ENCODE measurements at regions of chr1 and their contacts with region 1.

Region 1: DNA sequence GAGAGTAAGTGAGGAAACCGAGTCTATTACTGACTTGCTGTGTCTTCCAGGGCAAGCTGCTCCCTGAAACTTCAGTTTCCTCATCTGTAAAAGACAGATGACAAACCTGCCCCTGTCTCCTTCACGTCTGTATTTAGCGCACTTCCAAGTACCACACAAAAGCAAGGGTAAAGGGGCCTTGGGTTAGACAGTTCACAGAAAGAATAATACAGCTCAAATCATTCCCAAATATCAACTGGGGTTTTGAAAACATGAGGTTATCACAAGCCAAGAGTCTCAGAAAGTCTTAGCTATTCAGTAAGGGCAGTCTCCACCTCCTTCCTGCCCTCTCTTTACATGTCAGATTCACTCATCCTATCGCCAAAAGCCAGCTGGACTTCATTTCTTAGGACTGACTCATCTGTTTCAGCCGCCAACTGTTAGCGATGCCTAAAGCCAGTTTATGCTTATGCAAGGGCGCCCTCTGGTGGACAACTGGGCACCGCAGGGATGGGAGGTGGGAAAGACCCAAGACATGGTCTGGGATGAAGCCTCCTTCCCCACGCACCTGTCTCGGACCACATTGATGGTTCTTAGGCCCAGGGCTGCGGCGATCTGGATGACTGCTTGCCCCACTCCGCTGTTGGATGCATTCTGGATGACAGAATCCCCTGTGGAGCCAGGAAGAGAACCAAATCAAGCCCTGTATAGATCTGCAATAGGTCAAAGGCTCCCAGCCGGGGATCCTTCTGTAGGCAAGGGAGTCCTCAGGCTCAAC is 21.1 kb upstream of the SRSF4 start:
- DNase-seq: peak; percentile 99
- H3K4me3 ChIP-seq: no peak overlapping the region
- H3K27ac ChIP-seq: peak overlapping the region; percentile 44
- H3K4me1 ChIP-seq: no peaks in the 10 kb centered on the region
- H3K27me3 ChIP-seq: no peaks in the 10 kb centered on the region
- CTCF ChIP-seq: peak; percentile 96

Region 2: GRCh38 chr1:29011775-29012174 is 191.0 kb before region 1 on chr1:
- intact Hi-C with region 1: no loop called
- DNase-seq: no peak
- H3K4me3 ChIP-seq: no peak overlapping the region
- H3K27ac ChIP-seq: no peak overlapping the region
- H3K4me1 ChIP-seq: no peaks in the 10 kb centered on the region
- H3K27me3 ChIP-seq: no peaks in the 10 kb centered on the region
- CTCF ChIP-seq: no peak

Region 3: GRCh38 chr1:29033829-29034466 is 168.8 kb before region 1 on chr1:
- intact Hi-C with region 1: loop called (anchors 5 kb)
- DNase-seq: no peak
- H3K4me3 ChIP-seq: no peak overlapping the region
- H3K27ac ChIP-seq: no peak overlapping the region
- H3K4me1 ChIP-seq: no peaks in the 10 kb centered on the region
- H3K27me3 ChIP-seq: no peaks in the 10 kb centered on the region
- CTCF ChIP-seq: peak; percentile 71

Region 4: GRCh38 chr1:29124366-29125236 is 78.2 kb before region 1 on chr1:
- intact Hi-C with region 1: loop called (anchors 5 kb)
- DNase-seq: peak; percentile 63
- H3K4me3 ChIP-seq: peak overlapping the region; percentile 51
- H3K27ac ChIP-seq: peak overlapping the region; percentile 80
- H3K4me1 ChIP-seq: peaks cover 11% of the 10 kb centered on the region
- H3K27me3 ChIP-seq: peaks cover 45% of the 10 kb centered on the region
- CTCF ChIP-seq: peak; percentile 42

Measured in colonic mucosa (tissue), 4 donors.